Activated CD4-positive, alpha-beta T cell treated with anti-CD3 and anti-CD28 coated beads for 36 hours (primary cell): ENCODE measurements at regions of chr19 and their contacts with region 1.

Region 1: DNA sequence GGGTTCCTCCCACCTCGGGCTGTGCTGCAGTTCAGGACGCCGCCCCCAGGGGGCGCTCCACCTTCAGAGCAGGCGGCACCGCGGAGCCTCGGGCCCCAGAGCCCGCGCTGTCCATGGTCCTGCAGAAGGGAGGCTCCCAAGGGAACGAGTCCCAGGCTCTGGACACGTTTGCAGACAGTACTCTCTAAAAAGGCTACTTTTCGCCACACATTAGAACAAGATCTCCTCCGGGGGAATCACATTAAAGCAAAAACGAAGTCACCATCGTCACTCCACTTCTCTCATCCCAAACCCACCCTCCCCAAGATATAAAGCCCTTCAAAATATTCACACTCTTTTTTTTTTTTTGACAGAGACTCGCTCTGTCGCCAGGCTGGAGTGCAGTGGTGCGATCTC is 4.6 kb upstream of the SIGLEC10 start:
- DNase-seq: peak; percentile 94
- ATAC-seq: peak; percentile 60
- H3K4me3 Mint-ChIP-seq: no peak overlapping the region
- H3K27ac Mint-ChIP-seq: no peak overlapping the region
- H3K4me1 Mint-ChIP-seq: peaks cover 24% of the 10 kb centered on the region
- H3K27me3 Mint-ChIP-seq: peaks cover 20% of the 10 kb centered on the region

Region 2: GRCh38 chr19:51250786-51251467 is 171.1 kb before region 1 on chr19 and contains the start of gene SIGLECL1:
- CTCF ChIA-PET with region 1: no interaction called
- POLR2A ChIA-PET with region 1: interaction called, 10 read pairs
- intact Hi-C with region 1: no loop called
- DNase-seq: no peak
- ATAC-seq: no peak
- H3K4me3 Mint-ChIP-seq: no peak within 1 kb of the TSS
- H3K27ac Mint-ChIP-seq: no peak within 1 kb of the TSS
- H3K4me1 Mint-ChIP-seq: peaks cover under 1% of the 10 kb centered on the region
- H3K27me3 Mint-ChIP-seq: peaks cover 6% of the 10 kb centered on the region
- total RNA-seq, gene SIGLECL1: not detected

Region 3: DNA sequence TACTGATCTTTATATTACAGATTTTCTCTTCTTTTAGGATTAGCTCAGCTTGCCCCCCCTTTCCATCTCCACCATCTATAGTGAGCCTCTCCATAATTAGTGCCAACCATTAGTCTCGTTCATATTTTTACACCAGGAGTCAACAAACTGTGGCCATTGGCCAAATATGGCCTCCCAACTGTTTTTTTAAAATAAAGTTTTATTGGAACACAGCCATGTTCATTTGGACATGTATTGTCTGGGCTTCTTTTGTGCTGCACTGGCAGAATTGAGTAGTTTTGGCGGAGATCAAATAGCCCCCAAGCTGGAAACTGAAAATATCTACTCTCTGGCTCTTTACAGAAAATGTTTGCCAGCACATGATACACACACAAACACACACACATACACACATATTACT is 167.5 kb after region 1 on chr19:
- CTCF ChIA-PET with region 1: no interaction called
- POLR2A ChIA-PET with region 1: no interaction called
- intact Hi-C with region 1: no loop called
- DNase-seq: no peak
- ATAC-seq: no peak
- H3K4me3 Mint-ChIP-seq: no peak overlapping the region
- H3K27ac Mint-ChIP-seq: no peak overlapping the region
- H3K4me1 Mint-ChIP-seq: peaks cover 10% of the 10 kb centered on the region
- H3K27me3 Mint-ChIP-seq: no peaks in the 10 kb centered on the region

Region 4: DNA sequence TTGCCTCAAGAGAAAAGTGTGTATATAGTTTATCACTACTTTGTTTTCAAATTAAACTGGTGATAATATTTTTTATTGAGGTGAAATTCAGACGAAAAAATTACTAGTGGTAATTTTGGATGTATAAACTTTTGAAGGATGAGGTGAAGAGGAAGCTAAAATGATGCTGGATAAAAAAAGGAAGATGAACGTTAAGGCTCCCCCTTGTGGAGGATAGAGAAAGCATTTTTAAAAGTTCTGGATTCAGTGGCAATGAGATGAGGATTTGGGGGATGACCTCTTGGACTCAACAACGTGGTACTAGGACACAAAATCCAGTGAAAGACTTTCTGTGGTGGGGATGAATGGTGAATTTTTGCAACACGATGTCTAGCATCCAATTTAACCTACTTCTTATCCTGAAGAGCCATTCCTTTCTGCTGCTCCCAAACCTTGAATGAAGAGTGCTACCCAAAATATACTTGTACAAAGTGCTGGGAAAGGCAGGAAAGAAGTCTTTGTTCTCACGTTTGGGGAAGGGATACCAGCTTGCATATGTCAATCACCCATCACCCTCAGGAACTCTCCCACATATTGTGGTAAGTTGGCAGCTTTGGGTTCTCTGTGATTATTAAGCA is 215.4 kb after region 1 on chr19:
- CTCF ChIA-PET with region 1: interaction called, 5 read pairs
- POLR2A ChIA-PET with region 1: no interaction called
- intact Hi-C with region 1: loop called in 1 of 2 experiments (anchors 5 kb)
- DNase-seq: no peak
- ATAC-seq: no peak
- H3K4me3 Mint-ChIP-seq: no peak overlapping the region
- H3K27ac Mint-ChIP-seq: no peak overlapping the region
- H3K4me1 Mint-ChIP-seq: no peaks in the 10 kb centered on the region
- H3K27me3 Mint-ChIP-seq: peaks cover 29% of the 10 kb centered on the region